ENCODE measurements at regions of chr19 and their contacts with region 1.

Region 1: DNA sequence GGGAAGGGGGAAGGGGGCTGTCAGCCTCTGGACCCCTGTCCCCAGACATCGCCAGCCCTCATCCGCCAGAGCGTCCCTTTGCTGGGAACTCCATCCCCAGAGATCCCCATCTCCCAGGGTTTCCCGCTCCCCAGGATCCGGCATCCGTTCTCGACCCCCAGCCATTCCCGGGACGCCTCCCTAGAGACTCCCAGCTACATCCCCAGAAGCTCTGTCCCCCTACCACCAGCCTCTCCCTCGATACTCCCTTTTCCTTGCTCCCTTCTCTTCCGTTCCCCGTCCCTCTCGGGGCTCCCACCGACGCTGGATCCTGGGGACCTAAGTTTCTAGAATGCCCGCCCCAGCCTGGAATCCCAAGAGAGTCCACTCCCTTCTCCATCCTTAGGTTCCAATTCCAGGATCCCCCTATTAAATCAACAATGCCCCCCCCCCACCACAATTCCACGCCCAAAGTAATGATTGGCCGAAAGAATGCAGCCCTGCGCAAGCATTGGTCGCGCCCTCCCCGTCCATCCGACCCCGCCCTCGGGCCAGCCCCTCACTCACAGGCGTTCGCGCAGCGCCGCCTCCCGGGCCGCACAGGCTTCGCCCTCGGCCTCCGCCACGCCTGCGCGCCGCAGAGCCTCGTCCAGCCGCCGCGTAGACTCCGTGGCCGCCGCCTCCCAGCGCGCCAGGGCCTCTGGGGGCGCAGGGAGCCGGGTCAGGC is 3.2 kb downstream of the CCDC194 start:
- DNase-seq: peak; percentile 91
- ATAC-seq: peak; percentile 98
- H3K4me3 Mint-ChIP-seq: peak overlapping the region; percentile 79
- H3K27ac Mint-ChIP-seq: no peak overlapping the region
- H3K4me1 Mint-ChIP-seq: peaks cover 32% of the 10 kb centered on the region
- H3K27me3 Mint-ChIP-seq: peaks cover 15% of the 10 kb centered on the region

Region 2: DNA sequence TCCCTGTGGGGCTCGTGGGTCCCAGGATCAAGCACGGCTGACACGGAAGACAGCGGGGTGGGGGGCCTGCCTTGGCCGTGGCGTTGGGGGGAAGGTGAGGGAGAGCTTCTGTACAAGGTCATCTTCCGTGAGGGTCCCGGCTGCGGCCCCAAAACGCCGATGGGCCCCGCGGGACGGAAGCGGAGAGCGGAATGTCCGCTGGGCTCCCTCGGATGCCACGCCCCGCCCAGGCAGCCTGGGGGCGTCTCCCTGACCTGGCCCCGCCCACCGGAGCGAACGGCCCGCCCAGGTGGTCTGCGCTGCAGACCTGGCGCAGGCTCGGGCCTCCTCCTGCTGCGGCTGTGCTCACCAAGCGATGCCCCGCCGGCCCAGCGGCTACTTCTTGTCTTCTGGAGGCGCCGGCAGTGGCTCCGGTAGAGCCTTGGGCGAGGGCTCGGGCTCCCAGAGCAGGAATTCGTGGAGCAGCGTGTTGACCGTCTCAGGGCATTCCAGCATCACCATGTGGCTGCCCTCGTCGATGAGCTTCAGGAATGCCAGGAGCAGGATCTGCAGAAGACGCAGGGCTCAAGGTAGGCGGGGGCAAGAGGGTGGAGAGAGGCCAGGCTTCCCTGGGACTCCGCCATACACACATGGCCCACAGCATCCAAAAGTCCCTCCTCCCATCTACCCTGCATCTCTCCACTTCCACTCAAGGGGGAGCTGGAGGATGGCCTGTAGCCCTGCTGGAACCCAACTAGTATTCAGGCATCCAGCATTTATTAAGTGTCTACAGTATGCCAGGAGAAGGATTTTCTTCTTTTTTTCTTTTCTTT is 98.3 kb before region 1 on chr19:
- CTCF ChIA-PET with region 1: interaction called, 22 read pairs
- POLR2A ChIA-PET with region 1: interaction called, 4 read pairs
- DNase-seq: peak; percentile 86
- ATAC-seq: peak; percentile 97
- H3K4me3 Mint-ChIP-seq: peak overlapping the region; percentile 85
- H3K27ac Mint-ChIP-seq: peak overlapping the region; percentile 77
- H3K4me1 Mint-ChIP-seq: peaks cover 15% of the 10 kb centered on the region
- H3K27me3 Mint-ChIP-seq: peaks cover 4% of the 10 kb centered on the region

Region 3: GRCh38 chr19:17336872-17337722 is 53.7 kb before region 1 on chr19 and contains the start of gene GTPBP3:
- CTCF ChIA-PET with region 1: interaction called, 12 read pairs
- POLR2A ChIA-PET with region 1: no interaction called
- DNase-seq: peak; percentile 99
- ATAC-seq: peak; percentile 91
- H3K4me3 Mint-ChIP-seq: peak within 1 kb of the TSS; percentile 97
- H3K27ac Mint-ChIP-seq: peak within 1 kb of the TSS; percentile 88
- H3K4me1 Mint-ChIP-seq: peaks cover 45% of the 10 kb centered on the region
- H3K27me3 Mint-ChIP-seq: no peaks in the 10 kb centered on the region
- total RNA-seq, gene GTPBP3: 38.6 to 39.4 TPM

Region 4: GRCh38 chr19:17376935-17377600 is 13.8 kb before region 1 on chr19 and contains the start of gene PLVAP:
- CTCF ChIA-PET with region 1: interaction called, 10 read pairs
- POLR2A ChIA-PET with region 1: no interaction called
- DNase-seq: no peak
- ATAC-seq: no peak
- H3K4me3 Mint-ChIP-seq: no peak within 1 kb of the TSS
- H3K27ac Mint-ChIP-seq: no peak within 1 kb of the TSS
- H3K4me1 Mint-ChIP-seq: peaks cover 3% of the 10 kb centered on the region
- H3K27me3 Mint-ChIP-seq: peaks cover 11% of the 10 kb centered on the region
- total RNA-seq, gene PLVAP: 0.11 TPM in 1 of 2 experiments, not detected in the other

Region 5: DNA sequence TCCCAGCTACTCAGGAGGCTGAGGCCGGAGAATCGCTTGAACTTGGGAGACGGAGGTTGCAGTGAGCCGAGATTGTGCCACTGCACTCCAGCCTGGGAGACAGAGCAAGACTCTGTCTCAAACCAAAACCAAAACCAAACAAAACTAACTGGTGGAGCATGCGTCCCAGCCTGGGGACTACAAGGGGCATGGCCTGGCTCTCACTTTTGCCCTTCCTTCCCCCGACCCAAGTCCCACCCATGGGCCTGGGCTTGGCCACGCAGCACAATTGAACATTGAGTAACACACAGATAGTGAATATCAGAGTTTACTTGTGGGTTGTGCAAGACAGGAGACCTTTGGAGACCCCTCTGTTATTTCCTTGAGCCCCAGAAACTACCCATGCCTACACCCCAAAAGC is 44.4 kb after region 1 on chr19:
- CTCF ChIA-PET with region 1: no interaction called
- POLR2A ChIA-PET with region 1: no interaction called
- DNase-seq: no peak
- ATAC-seq: no peak
- H3K4me3 Mint-ChIP-seq: no peak overlapping the region
- H3K27ac Mint-ChIP-seq: no peak overlapping the region
- H3K4me1 Mint-ChIP-seq: peaks cover 5% of the 10 kb centered on the region
- H3K27me3 Mint-ChIP-seq: no peaks in the 10 kb centered on the region